Mammary epithelial cell (primary cell): ENCODE measurements at regions of chr1 and their contacts with region 1.

Region 1: DNA sequence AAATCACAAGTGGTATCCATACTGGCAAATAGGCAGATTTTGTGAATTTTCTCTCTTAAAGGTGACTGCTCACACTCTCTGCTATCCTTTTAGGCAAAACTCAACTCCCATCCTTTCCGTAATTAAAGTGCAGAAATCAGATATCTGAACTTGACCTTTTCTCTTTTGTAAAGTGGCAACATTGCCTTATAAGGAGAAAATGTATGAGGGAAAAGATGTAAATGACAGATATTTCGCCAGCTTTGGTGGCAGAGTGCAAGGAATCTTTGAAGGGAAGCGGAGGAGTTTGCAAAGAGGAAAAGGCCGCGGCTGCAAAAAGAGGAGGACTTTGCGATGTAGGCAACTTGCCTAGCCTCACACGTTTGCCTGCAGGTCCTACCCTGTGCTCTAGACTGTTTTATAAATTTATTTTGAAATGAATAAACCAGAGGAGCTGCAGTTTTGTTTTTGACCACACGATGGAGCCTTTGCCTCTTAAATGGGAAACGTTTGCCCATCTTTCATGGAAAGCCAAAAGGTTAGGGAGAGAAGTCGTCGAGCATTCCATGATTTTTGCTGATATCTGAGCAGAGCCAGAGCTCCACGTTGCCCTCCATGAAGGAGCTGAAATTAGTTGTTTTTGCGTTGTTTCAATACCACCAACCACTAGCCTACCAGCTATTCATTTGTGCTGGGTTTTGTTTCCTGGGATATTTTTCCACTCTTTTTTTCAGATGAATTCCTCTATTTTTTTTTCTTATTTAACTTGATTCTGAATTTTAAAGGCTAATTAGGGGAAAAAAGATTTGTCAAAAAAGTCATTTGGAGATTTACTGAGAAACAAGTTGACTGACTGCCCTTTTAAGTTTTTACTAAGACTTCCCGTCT is 242.3 kb downstream of the LMX1A start:
- DNase-seq: peak; percentile 38
- H3K4me3 ChIP-seq: no peak overlapping the region
- H3K27ac ChIP-seq: no peak overlapping the region
- H3K4me1 ChIP-seq: peaks cover 13% of the 10 kb centered on the region
- H3K27me3 ChIP-seq: no peaks in the 10 kb centered on the region
- CTCF ChIP-seq: peak; percentile 77 to 80

Region 2: DNA sequence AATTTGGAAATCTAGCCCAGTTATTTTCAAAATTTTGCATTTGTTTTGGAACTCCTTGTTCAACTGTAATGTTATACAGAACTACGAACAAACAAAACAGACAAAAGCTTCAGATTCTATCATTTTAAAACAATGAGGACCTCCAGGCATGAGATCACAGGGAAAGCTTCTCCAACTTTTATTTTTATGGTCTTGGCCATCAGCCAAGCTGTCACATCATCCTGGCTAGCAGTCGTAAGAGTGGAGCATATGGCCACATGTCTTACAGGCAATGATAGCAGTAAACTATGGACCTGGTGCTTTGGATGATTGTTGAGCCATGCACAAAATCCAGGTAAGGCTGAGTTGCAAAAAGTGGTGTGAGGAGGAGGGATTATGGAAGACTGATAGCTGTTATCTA is 57.3 kb before region 1 on chr1:
- CTCF ChIA-PET with region 1: no interaction called
- dilution Hi-C with region 1: no loop called
- in situ Hi-C with region 1: no loop called
- intact Hi-C with region 1: no loop called
- DNase-seq: no peak
- H3K4me3 ChIP-seq: no peak overlapping the region
- H3K27ac ChIP-seq: no peak overlapping the region
- H3K4me1 ChIP-seq: no peaks in the 10 kb centered on the region
- H3K27me3 ChIP-seq: no peaks in the 10 kb centered on the region
- CTCF ChIP-seq: no peak

Region 3: DNA sequence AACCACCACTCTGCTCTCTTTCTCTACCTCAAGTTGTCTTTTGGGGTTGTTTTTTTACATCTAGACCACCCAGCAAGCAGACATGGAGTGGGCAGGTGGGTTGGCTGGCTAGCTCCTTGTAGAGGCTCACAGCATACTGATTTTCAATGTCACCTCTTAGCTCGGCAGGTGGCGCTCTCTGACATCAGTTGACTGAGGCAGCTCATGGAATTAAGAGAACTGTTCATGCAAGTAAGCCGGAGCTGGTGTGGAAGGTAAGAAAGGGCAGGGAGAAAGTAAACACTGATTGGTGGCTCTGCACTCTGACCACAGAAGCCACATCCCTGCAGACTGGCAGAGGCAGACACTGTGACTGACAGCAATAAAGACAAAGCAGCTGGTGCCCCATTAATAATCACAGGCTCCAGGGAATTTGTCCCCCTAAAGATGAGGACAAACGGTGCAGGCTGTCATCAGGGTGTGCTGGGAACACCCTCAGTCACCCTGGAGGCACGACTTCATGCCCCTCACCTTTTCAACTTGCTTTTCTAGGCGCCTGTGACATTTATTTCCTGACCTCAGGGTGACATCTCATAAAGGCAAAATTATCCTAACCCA is 15.4 kb after region 1 on chr1:
- CTCF ChIA-PET with region 1: interaction called, 10 read pairs
- dilution Hi-C with region 1: no loop called
- in situ Hi-C with region 1: no loop called
- intact Hi-C with region 1: loop called (anchors 2 kb)
- DNase-seq: peak; percentile 55
- H3K4me3 ChIP-seq: no peak overlapping the region
- H3K27ac ChIP-seq: no peak overlapping the region
- H3K4me1 ChIP-seq: no peaks in the 10 kb centered on the region
- H3K27me3 ChIP-seq: peaks cover 13% of the 10 kb centered on the region
- CTCF ChIP-seq: peak; percentile 79 to 82